HCT116 (cell line): ENCODE measurements at regions of chr5 and their contacts with region 1.

Region 1: DNA sequence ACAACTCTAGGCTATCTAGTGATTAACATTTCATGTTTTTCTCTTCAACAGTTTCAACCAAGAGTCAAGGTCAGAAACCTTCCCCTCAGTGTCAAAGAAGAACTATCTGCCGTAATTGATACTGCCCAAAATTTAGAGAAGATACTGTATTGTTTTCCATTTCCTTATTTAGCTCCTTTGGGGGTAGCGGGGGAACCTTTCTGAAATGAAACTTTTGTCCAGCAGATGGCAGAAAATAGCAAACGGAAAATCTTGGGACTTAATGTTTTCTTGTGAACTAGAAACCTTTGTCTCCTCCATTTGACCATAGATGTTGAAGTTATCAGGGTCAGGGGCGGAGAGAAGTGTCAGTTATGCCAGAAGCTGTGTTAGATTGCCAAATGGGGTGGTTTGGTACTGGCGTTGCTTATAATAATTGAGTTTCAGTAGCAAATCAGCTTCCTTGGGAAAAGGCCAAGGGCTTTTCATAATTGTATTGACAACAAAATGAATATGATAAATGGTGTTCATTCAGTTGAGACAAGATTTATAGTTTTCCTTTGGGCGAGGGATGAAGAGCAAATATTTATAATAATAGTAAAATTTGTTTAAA is 101.7 kb upstream of the TLX3 start:
- DNase-seq: peak; percentile 43
- ATAC-seq: peak; percentile 85
- H3K4me3 ChIP-seq: no peak overlapping the region
- H3K27ac ChIP-seq: no peak overlapping the region
- H3K4me1 ChIP-seq: 0 out of 4 replicates have a peak, but pooled peaks cover 0 to 3% of the 10 kb centered on the region in 2 experiments
- H3K27me3 ChIP-seq: no peaks in the 10 kb centered on the region
- CTCF ChIP-seq: peak; percentile 56 to 79 (median 76)
- POLR2A ChIP-seq: no peak
- RAD21 ChIP-seq: peak; percentile 73

Region 2: GRCh38 chr5:170747851-170748250 is 459.5 kb before region 1 on chr5:
- CTCF ChIA-PET with region 1: no interaction called
- POLR2A ChIA-PET with region 1: no interaction called
- RAD21 ChIA-PET with region 1: no interaction called
- intact Hi-C with region 1: loop called (anchors 10 kb)
- DNase-seq: peak; percentile 16
- ATAC-seq: peak; percentile 35; the same call in 1 of the 2 replicates
- H3K4me3 ChIP-seq: no peak overlapping the region
- H3K27ac ChIP-seq: no peak overlapping the region
- H3K4me1 ChIP-seq: peaks cover 0 to 10% of the 10 kb centered on the region in 2 experiments; a peak in 1 of 4 replicates
- H3K27me3 ChIP-seq: peaks cover 13% of the 10 kb centered on the region; the same call in 1 of the 2 replicates
- CTCF ChIP-seq: peak; percentile 40 to 68 (median 56); a peak in 5 of 6 replicates
- POLR2A ChIP-seq: no peak
- RAD21 ChIP-seq: peak; percentile 37; the same call in 1 of the 2 replicates

Region 3: GRCh38 chr5:170896779-170897178 is 310.6 kb before region 1 on chr5:
- CTCF ChIA-PET with region 1: no interaction called
- POLR2A ChIA-PET with region 1: no interaction called
- RAD21 ChIA-PET with region 1: no interaction called
- intact Hi-C with region 1: no loop called
- DNase-seq: no peak
- ATAC-seq: peak; percentile 75
- H3K4me3 ChIP-seq: no peak overlapping the region
- H3K27ac ChIP-seq: no peak overlapping the region
- H3K4me1 ChIP-seq: no peaks in the 10 kb centered on the region
- H3K27me3 ChIP-seq: no peaks in the 10 kb centered on the region
- CTCF ChIP-seq: peak in 2 of 3 experiments; percentile 46 to 53; a peak in 4 of 6 replicates
- POLR2A ChIP-seq: no peak
- RAD21 ChIP-seq: peak; percentile 30; the same call in 1 of the 2 replicates

Region 4: DNA sequence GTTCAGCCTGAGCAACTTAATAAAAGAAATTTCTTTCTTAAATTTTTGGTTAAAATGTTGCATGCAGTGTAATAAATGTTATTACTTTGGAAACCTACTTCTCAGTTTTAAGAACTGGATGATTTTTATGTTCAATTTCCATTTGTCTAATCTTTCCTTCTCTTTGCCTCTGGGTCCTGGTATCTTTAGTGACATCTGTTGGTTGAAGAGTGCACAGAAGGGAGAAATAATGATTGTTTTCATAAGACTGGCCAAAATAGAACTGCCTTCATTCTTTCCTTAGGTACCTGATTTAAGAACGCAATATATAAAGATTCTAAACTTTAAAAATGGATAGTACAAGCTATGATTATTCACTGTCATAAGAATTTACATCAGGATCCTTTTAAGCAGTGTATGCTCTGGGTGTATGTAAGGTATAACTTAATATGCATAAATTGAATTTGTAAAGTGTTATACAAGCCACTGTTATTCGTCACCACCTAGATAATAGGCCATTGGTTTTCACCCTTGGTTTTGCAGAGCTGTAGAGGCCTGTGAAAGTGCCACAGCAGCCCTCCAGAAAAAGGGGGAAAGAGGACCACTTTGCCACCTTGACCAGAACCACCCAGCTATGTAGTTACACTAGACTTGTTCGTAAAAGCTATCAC is 18.9 kb after region 1 on chr5:
- CTCF ChIA-PET with region 1: interaction called, 11 read pairs
- POLR2A ChIA-PET with region 1: no interaction called
- RAD21 ChIA-PET with region 1: no interaction called
- intact Hi-C with region 1: no loop called
- DNase-seq: no peak
- ATAC-seq: peak; percentile 50; the same call in 1 of the 2 replicates
- H3K4me3 ChIP-seq: no peak overlapping the region
- H3K27ac ChIP-seq: no peak overlapping the region
- H3K4me1 ChIP-seq: no peaks in the 10 kb centered on the region
- H3K27me3 ChIP-seq: no peaks in the 10 kb centered on the region
- CTCF ChIP-seq: peak in 2 of 3 experiments; percentile 38 to 40; a peak in 3 of 6 replicates
- POLR2A ChIP-seq: no peak
- RAD21 ChIP-seq: no peak; the same call in 1 of the 2 replicates

Region 5: DNA sequence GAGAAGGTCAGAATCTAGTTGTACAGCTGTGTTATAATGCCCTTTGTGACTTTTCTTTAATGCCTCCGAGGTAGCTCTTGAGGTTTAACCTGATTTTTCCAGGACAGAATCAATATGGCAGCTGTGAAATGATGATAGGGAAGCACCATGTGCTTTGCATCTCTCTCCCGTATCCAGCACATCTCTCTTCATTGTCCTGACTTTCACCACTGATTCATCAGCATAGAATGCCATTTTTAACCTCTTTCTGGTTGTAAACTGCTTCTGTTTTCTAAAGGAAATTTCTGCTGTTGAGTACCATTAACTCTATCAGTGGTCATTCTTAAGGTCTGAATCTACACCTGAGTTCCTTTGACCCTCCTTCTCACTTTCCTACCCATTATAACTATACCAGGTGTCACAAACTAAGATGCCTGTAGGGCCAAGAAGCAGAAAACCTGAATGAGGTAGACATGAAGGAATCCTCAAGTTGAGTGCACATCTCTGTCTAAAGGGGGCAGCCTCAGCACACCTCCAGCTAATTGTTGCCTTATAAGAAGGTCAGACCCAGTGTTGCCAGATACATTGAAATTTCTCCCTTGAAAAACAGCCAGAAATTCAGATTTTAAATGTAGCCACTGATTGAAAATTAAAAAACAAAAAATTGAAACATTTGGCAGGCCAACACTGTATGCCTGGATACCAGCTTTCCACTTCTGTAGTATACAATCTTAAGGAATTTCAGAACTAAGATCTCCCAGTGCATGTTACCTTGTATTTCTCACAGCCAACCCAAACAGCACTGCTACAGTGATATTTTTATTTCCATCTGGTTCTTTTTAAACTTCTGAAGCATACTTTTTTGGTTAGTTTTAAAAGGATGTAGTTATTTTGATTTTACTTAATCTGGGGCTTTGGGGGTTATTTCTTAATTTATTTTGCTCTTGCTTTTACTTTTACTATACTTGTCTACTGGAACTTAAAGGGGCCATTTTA is 65.9 kb after region 1 on chr5:
- CTCF ChIA-PET with region 1: interaction called, 10 read pairs
- POLR2A ChIA-PET with region 1: no interaction called
- RAD21 ChIA-PET with region 1: no interaction called
- intact Hi-C with region 1: no loop called
- DNase-seq: peak; percentile 44
- ATAC-seq: peak; percentile 97
- H3K4me3 ChIP-seq: no peak overlapping the region
- H3K27ac ChIP-seq: no peak overlapping the region
- H3K4me1 ChIP-seq: no peaks in the 10 kb centered on the region
- H3K27me3 ChIP-seq: no peaks in the 10 kb centered on the region
- CTCF ChIP-seq: peak; percentile 61 to 63 (median 63)
- POLR2A ChIP-seq: no peak
- RAD21 ChIP-seq: peak; percentile 75

Region 6: DNA sequence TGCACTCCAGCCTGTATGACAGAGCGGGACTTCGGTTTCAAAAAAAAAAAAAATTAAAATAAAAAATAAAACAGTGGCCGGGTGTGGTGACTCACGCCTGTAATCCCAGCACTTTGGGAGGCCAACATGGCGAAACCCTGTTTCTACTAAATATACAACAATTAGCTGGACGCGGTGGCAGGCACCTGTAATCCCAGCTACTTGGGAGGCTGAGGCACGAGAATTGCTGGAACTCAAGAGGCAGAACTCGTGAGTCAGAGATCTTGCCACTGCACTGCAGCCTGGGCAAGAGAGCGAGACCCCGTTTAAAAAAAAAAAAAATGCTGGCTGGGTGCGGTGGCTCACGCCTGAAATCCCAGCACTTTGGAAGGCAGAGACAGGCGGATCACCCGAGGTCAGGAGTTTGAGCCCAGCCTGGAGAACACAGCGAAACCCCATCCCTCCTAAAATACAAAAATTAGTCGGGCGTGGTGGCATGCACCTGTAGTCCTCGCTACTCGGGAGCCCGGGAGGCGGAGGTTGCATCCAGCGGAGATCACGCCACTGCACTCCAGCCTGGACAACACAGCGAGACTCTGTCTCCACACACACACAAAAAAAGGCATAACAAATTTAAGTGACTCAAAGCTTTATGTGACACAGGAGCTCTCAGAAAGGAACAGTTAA is 178.8 kb after region 1 on chr5:
- CTCF ChIA-PET with region 1: no interaction called
- POLR2A ChIA-PET with region 1: no interaction called
- RAD21 ChIA-PET with region 1: no interaction called
- intact Hi-C with region 1: no loop called
- DNase-seq: no peak
- ATAC-seq: no peak
- H3K4me3 ChIP-seq: peak overlapping the region in 1 of 2 experiments; percentile 80; a peak in 2 of 4 replicates
- H3K27ac ChIP-seq: no peak overlapping the region
- H3K4me1 ChIP-seq: peaks cover 17 to 47% of the 10 kb centered on the region in 2 experiments
- H3K27me3 ChIP-seq: no peaks in the 10 kb centered on the region
- CTCF ChIP-seq: no peak
- POLR2A ChIP-seq: no peak
- RAD21 ChIP-seq: no peak